CD4-positive, alpha-beta T cell (primary cell): ENCODE measurements at regions of chr5 and their contacts with region 1.

Region 1: GRCh38 chr5:82641331-82642003 is 363.3 kb upstream of the RPS23 start:
- DNase-seq: peak in 3 of 14 experiments; percentile 39 to 54 (median 53)
- ATAC-seq: no peak
- H3K4me3 ChIP-seq: no peak overlapping the region
- H3K4me3 Mint-ChIP-seq: no peak overlapping the region
- H3K27ac ChIP-seq: no peak overlapping the region
- H3K27ac Mint-ChIP-seq: no peak overlapping the region
- H3K4me1 ChIP-seq: no peaks in the 10 kb centered on the region
- H3K4me1 Mint-ChIP-seq: no peaks in the 10 kb centered on the region
- H3K27me3 ChIP-seq: no peaks in the 10 kb centered on the region
- H3K27me3 Mint-ChIP-seq: no peaks in the 10 kb centered on the region
- CTCF ChIP-seq: peak; percentile 48

Region 2: DNA sequence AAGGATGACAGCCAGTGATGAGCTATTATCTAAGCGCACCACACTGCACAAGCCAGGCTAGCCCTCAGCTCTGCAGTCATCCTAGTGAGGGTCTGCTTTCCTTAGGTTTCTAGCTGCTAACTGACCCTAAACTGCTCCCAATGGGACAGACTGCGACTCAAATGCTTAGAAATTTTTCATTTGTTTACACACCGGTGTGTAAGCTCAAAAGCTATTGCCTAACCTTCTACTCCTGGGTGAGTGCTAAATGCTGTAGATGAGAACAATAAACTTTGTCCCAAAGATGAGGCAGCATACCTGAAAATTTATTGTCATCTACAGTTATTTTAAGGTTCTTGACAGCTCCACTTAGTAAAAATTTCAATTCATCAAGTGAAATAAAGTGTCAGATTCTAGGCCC is 124.3 kb after region 1 on chr5:
- CTCF ChIA-PET with region 1: no interaction called
- POLR2A ChIA-PET with region 1: no interaction called
- intact Hi-C with region 1: no loop called
- DNase-seq: no peak
- ATAC-seq: no peak
- H3K4me3 ChIP-seq: no peak overlapping the region
- H3K4me3 Mint-ChIP-seq: no peak overlapping the region
- H3K27ac ChIP-seq: no peak overlapping the region
- H3K27ac Mint-ChIP-seq: no peak overlapping the region
- H3K4me1 ChIP-seq: no peaks in the 10 kb centered on the region
- H3K4me1 Mint-ChIP-seq: no peaks in the 10 kb centered on the region
- H3K27me3 ChIP-seq: no peaks in the 10 kb centered on the region
- H3K27me3 Mint-ChIP-seq: no peaks in the 10 kb centered on the region
- CTCF ChIP-seq: no peak

Region 3: DNA sequence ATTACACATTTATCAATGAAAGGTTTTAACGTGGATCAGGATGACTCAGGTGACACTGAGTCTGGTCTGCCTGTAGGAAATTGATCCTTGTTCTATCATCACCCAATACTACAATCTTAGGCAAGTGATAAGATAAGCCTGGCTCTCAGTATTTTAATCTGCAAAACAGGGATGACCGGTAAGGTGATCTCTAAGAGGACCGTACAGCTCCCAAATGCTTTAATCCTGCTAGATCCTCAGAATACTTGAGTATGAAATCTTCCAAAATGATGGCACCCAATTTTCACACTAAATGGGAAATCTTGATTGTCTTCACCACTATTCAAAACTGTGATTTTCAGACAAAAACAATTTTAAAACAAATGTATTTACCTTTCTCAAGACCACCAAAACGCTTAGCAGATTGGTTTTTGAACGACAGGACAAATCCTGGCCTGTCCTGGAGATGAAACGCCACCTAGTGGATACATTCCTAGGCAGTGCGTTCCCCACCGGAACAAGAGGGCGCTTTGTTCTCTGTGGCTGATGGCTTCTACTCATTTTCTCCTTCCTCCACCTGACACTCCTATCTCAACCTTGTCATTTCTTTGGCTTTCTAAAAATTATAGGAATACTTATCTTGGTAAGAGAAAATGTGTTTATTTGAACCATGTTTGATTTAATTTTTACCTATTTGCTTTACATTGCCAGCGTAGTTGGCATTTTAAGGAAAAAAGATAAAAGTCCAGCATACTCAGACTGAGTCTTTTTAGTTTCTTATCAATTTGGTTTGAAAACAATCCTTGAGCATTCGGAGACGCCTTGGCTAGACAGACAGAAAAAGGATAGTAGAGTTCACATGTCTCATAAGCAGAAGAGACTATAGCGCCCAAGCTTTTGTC is 788.9 kb after region 1 on chr5:
- CTCF ChIA-PET with region 1: no interaction called
- POLR2A ChIA-PET with region 1: no interaction called
- intact Hi-C with region 1: loop called (anchors 1 to 10 kb)
- DNase-seq: peak; percentile 7 to 71 (median 26)
- ATAC-seq: peak; percentile 69
- H3K4me3 ChIP-seq: no peak overlapping the region
- H3K4me3 Mint-ChIP-seq: no peak overlapping the region
- H3K27ac ChIP-seq: no peak overlapping the region
- H3K27ac Mint-ChIP-seq: no peak overlapping the region
- H3K4me1 ChIP-seq: no peaks in the 10 kb centered on the region
- H3K4me1 Mint-ChIP-seq: no peaks in the 10 kb centered on the region
- H3K27me3 ChIP-seq: no peaks in the 10 kb centered on the region
- H3K27me3 Mint-ChIP-seq: no peaks in the 10 kb centered on the region
- CTCF ChIP-seq: peak; percentile 72